ENCODE measurements at regions of chr11 and their contacts with region 1.

Region 1: GRCh38 chr11:66045177-66045639 is 3.8 kb downstream of the GAL3ST3 start:
- DNase-seq: peak; percentile 84 to 91 (median 89)
- H3K4me3 ChIP-seq: peak overlapping the region in 4 of 7 experiments; percentile 9 to 39 (median 24)
- H3K27ac ChIP-seq: no peak overlapping the region
- H3K4me1 ChIP-seq: peaks cover 0 to 17% (median 9%) of the 10 kb centered on the region in 4 experiments
- H3K27me3 ChIP-seq: peaks cover 0 to 5% (median 0%) of the 10 kb centered on the region in 5 experiments

Region 2: DNA sequence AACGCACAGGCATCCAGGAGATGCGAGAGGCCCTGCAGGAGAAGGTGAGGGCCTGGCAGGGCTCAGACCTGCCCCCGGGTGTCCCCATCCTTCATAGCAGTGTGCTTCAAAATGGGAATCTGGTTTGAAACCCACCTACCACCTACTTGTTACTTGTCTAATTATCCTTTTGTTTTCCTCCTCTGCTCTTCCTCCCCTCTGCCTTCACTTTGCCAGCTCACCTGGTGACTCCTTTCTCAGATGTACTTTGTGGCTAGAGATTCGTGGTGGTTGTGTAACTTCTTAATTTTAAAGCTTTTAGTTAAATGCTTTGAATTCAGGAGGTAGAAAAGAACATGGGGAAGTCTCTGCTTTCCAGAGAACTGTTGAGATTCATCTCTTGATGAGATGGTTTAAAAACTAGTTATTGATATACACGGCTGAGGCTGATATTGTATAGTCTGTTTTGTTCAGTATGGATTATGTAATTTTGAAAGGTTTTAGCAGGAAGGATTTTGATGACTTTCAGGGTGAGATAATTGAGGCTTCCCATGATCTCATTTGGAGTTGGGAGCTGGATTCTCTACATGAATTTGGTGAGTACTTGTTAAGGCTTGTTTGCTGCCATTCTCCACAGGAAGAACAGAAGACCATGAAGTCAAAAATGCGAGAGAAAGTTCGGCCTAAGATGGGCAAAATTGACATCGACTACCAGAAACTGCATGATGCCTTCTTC is 14.9 kb after region 1 on chr11:
- CTCF ChIA-PET with region 1: interaction called, 99 read pairs
- POLR2A ChIA-PET with region 1: interaction called, 3 read pairs
- DNase-seq: no peak
- H3K4me3 ChIP-seq: no peak overlapping the region
- H3K27ac ChIP-seq: no peak overlapping the region
- H3K4me1 ChIP-seq: no peaks in the 10 kb centered on the region
- H3K27me3 ChIP-seq: no peaks in the 10 kb centered on the region